Activated naive CD4-positive, alpha-beta T cell treated with anti-CD3 and anti-CD28 coated beads for 36 hours (primary cell): ENCODE measurements at regions of chr5 and their contacts with region 1.

Region 1: DNA sequence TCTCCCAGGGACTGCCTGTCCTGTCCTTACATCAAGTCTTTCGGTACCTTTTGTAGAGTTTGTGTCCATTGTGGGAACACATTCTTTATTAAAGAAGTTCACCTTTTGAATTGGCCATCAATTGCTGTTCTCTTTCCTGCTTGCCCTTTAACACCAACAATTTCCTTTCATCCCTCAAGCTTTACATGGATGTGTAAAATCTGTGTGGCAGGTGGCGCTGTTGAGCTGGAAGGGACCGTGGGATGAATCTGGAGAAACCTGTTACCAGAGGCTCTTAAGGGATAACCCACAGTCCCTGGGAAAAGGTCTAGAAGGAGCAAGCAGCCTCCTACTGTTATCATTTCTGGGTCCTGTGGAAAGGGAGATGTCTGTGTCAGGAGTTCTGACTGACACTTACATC is 7.9 kb upstream of the ZFP62 start:
- DNase-seq: peak; percentile 91
- H3K4me3 Mint-ChIP-seq: no peak overlapping the region
- H3K27ac Mint-ChIP-seq: no peak overlapping the region
- H3K4me1 Mint-ChIP-seq: peaks cover 4% of the 10 kb centered on the region
- H3K27me3 Mint-ChIP-seq: no peaks in the 10 kb centered on the region

Region 2: DNA sequence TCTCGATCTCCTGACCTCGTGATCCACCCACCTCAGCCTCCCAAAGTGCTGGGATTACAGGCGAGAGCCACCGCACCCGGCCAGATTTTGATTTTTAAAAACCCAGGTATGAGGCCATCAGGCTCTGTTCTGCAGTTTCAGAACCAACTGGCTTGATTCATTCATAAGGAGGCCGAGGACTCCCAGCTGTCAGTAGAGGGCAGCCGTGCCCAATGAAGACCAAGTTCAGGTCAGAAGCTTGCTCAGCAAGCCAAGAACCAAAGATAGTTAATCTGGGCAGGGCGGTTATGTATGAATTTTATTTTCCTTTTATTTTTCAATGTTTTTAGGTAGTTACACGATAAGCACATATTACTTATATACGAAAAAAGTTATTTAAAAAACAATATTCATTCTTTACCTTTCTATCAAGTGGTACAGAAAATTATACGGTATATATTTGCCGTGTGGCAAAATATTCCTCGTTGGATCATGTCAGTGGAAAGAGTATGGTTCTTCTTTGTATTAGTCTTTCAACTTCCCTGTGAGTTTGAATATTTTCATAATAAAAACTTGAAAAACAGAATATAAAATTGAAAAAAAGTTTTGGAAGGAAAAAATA is 84.4 kb before region 1 on chr5:
- CTCF ChIA-PET with region 1: interaction called, 4 read pairs
- intact Hi-C with region 1: loop called (anchors 2 kb)
- DNase-seq: peak; percentile 89
- H3K4me3 Mint-ChIP-seq: no peak overlapping the region
- H3K27ac Mint-ChIP-seq: no peak overlapping the region
- H3K4me1 Mint-ChIP-seq: peaks cover 20% of the 10 kb centered on the region
- H3K27me3 Mint-ChIP-seq: no peaks in the 10 kb centered on the region

Region 3: DNA sequence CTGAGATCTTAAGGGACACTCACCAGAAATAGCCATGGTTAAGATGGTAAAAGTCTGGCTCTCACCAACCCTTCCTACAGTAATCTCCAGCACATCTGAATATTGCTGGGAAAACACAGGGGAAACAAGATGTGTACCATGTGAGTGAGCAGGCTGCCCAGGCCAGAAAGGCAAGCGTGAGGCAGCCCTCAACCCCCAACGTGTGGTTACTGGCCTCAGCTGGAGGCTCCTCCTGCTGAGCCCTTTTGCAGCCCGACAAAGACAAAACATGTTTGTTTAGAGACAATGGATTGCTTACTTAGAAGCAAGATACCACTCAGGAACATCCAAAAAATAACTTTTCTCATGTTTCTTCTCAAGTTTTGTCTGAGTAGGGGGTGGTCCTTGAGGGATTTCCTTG is 24.5 kb before region 1 on chr5:
- CTCF ChIA-PET with region 1: no interaction called
- intact Hi-C with region 1: no loop called
- DNase-seq: no peak
- H3K4me3 Mint-ChIP-seq: no peak overlapping the region
- H3K27ac Mint-ChIP-seq: no peak overlapping the region
- H3K4me1 Mint-ChIP-seq: no peaks in the 10 kb centered on the region
- H3K27me3 Mint-ChIP-seq: no peaks in the 10 kb centered on the region

Region 4: DNA sequence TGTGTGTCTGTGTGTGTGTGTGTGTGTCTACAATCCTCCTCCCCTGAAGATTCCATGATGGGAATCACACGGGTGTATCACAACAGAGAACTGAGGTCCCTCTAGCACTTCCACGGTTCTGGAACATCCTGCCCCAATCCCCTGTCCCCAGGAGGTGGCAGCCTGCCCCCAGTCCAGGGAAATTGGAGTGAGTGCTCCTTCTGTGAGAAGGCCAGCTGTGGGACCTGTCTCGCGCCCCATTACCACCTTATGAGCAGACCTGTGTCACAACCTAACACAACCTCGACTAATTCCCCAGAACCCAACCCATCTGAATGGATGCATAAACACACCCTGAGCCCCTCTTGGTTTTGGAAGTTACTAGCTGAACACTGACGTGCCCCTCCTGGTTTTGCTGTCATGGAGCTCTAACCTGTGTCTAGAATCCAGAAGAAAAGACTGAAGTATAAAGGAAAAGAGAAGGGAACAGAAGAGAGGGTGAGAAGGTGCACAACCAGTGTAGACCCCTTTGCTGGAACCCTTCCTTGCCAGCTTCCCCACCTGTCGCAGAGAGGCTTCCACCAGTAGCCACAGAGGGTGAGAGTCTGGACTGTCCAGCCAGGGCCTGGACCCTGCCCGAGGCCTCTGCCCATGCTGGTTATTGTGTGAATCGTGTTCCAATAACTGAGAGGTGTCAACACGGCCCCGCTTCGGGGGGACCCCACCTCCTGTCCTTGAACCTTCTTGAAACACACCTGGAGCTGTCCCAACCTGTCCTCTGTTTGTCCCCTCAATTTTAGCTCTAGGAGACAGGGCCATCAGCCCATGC is 174.5 kb after region 1 on chr5:
- CTCF ChIA-PET with region 1: no interaction called
- intact Hi-C with region 1: loop called (anchors 2 kb)
- DNase-seq: no peak
- H3K4me3 Mint-ChIP-seq: no peak overlapping the region
- H3K27ac Mint-ChIP-seq: no peak overlapping the region
- H3K4me1 Mint-ChIP-seq: no peaks in the 10 kb centered on the region
- H3K27me3 Mint-ChIP-seq: peaks cover 43% of the 10 kb centered on the region